B cell (primary cell): ENCODE measurements at regions of chr12 and their contacts with region 1.

Region 1: DNA sequence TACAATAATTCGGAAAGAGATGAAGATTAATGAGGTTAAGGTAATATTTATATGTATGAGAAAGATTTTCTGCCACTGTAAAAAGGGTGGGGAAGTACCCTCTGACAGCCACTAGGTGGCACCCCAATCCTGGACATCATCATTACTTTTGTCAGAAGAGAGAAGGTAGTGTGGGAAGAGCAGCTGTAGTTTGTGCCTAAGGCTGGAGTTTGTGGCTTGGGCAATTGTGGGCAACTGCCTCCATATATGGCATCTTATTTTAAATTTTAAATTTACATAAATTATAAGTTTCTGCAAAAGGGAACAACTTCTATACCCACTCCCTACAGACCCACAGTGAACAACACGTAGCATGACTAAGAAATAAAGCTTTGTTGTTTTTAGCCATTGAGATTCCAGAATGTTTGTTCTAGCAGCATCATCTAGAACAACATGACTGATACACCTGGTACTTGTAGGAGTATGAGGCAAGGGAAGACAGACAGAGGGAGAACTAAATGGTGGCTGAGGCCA is 34.4 kb upstream of the SYCP3 start:
- DNase-seq: peak; percentile 77
- ATAC-seq: peak; percentile 86
- H3K4me3 ChIP-seq: no peak overlapping the region
- H3K4me3 Mint-ChIP-seq: no peak overlapping the region
- H3K27ac ChIP-seq: no peak overlapping the region
- H3K27ac Mint-ChIP-seq: no peak overlapping the region
- H3K4me1 ChIP-seq: no peaks in the 10 kb centered on the region
- H3K4me1 Mint-ChIP-seq: peaks cover 1% of the 10 kb centered on the region
- H3K27me3 ChIP-seq: no peaks in the 10 kb centered on the region
- H3K27me3 Mint-ChIP-seq: no peaks in the 10 kb centered on the region
- CTCF ChIP-seq: peak; percentile 98

Region 2: DNA sequence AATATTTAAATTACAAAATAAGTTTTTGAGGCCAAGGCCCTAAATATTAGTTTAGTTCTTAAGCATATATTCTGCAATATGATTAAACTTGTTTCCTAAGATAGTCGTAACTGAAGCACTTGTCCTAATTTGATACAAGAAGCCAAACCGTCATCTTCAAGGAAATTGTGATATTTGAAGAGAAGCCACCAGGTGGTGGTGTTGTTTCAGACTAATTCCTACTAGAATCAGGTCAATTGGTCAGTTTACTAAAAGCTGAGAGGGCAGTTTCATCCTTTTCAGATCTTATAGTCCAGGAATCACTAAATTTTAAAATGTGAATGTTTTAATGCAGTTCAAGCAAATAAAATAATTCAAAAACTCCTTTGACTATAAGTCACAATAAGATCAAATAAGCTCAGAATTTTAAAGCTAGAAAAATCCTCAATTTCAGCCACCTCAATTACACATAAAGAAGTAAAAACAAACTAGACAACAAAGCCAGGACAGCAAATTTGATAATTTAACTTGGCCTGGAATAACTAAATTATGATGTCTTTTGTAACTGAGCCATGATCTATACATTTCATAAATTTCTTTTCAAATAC is 359.1 kb before region 1 on chr12:
- CTCF ChIA-PET with region 1: interaction called, 11 read pairs
- POLR2A ChIA-PET with region 1: no interaction called
- intact Hi-C with region 1: loop called (anchors 2 kb)
- DNase-seq: peak; percentile 52
- ATAC-seq: no peak
- H3K4me3 ChIP-seq: no peak overlapping the region
- H3K4me3 Mint-ChIP-seq: no peak overlapping the region
- H3K27ac ChIP-seq: no peak overlapping the region
- H3K27ac Mint-ChIP-seq: no peak overlapping the region
- H3K4me1 ChIP-seq: no peaks in the 10 kb centered on the region
- H3K4me1 Mint-ChIP-seq: no peaks in the 10 kb centered on the region
- H3K27me3 ChIP-seq: peaks cover 0 to 3% (median 0%) of the 10 kb centered on the region in 4 experiments
- H3K27me3 Mint-ChIP-seq: peaks cover 5% of the 10 kb centered on the region
- CTCF ChIP-seq: peak; percentile 79

Region 3: DNA sequence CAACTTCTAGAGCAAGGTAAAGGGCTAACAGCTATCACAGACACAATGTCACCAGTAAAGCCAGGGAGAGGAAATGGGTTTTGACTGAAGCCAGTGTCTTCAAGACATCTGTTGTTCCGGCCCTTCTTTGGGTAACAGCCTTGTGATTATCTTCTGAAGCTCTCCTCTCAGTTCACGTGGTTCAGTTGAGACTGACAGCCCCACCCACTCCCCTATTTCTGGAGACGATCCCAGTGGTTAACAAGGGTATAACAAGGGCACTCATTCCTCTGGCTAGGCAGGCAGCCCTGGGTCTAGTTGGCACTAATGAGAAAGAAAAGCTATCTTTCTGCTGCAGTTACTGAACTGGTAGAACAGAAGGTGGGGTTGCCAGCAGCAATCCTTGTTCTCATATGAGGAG is 50.2 kb after region 1 on chr12:
- CTCF ChIA-PET with region 1: interaction called, 61 read pairs
- POLR2A ChIA-PET with region 1: no interaction called
- intact Hi-C with region 1: no loop called
- DNase-seq: peak; percentile 77
- ATAC-seq: peak; percentile 96
- H3K4me3 ChIP-seq: no peak overlapping the region
- H3K4me3 Mint-ChIP-seq: no peak overlapping the region
- H3K27ac ChIP-seq: peak overlapping the region in 1 of 2 donors; percentile 50
- H3K27ac Mint-ChIP-seq: peak overlapping the region; percentile 28
- H3K4me1 ChIP-seq: peaks cover 10 to 12% of the 10 kb centered on the region in 2 donors
- H3K4me1 Mint-ChIP-seq: peaks cover 47% of the 10 kb centered on the region
- H3K27me3 ChIP-seq: no peaks in the 10 kb centered on the region
- H3K27me3 Mint-ChIP-seq: no peaks in the 10 kb centered on the region
- CTCF ChIP-seq: peak; percentile 43

Region 4: DNA sequence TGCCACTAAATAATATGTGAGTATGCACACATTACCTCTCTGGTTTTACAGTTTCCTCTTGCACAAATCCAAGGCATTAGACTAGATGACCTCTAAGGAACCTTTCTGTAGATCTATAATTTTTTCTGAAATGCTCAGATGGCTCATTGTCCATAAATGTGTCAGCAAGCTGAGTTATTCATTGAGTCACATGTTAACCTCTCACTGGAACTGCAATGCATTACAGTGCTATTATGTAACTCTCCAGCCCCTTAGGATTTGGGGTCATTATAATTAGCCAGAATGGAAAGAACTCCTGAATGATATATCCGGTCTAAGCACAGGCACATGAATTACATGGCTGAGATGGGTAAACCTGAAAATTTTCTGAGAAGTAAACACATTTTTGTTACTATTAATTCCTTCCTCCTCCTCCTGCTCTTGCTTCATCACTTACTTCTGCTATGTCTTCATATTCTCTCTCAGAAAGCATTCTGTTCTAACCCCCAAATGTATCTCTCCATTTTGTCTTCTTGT is 83.4 kb after region 1 on chr12:
- CTCF ChIA-PET with region 1: no interaction called
- POLR2A ChIA-PET with region 1: no interaction called
- intact Hi-C with region 1: no loop called
- DNase-seq: no peak
- ATAC-seq: no peak
- H3K4me3 ChIP-seq: no peak overlapping the region
- H3K4me3 Mint-ChIP-seq: no peak overlapping the region
- H3K27ac ChIP-seq: no peak overlapping the region
- H3K27ac Mint-ChIP-seq: no peak overlapping the region
- H3K4me1 ChIP-seq: peaks cover 16% of the 10 kb centered on the region in 2 donors
- H3K4me1 Mint-ChIP-seq: peaks cover 27% of the 10 kb centered on the region
- H3K27me3 ChIP-seq: no peaks in the 10 kb centered on the region
- H3K27me3 Mint-ChIP-seq: no peaks in the 10 kb centered on the region
- CTCF ChIP-seq: no peak

Region 5: DNA sequence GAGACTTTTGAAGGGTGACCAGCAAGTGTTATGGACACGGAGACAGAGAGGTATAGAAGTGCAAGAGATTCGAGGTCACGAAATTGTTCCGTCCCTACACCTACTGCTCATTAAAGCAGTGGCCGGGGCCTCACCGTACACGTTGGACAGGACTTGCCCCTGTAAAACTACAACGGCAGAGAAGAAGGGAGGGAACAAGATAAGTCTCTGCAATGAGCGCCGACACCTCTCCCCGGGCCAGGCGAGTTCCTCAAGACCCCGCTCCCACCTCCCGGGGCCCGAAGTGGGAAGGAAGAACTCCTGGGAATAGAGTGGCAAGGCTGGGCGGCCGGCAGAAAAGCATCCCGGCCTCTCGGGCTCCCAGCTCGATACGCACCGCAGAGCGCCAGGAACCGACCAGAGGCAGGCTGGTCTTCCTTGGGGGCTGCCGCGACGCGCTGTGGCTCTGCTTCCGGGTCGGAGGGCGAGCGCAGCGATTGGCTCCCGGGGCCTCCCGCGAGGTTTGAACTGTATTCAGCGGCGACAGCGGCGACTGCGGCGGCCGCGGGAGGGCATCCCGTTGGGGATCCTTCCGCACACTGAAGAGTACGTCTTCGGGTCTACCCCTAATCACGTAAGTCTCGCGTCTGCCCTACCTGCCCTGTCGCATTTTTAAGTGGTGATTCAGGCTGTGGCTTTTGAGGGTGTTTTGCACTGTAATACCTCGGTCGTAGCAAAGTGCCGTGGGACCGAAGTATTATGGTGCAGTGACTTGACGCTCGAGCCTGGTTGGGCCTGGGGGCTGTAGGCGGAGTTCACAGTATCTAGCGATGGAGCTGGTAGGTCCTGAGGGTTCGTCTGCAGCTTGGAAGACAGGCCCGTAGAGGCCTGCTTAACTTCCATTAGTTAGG is 346.2 kb after region 1 on chr12 and contains the starts of genes NUP37 and PARPBP:
- CTCF ChIA-PET with region 1: no interaction called
- POLR2A ChIA-PET with region 1: no interaction called
- intact Hi-C with region 1: loop called (anchors 5 kb)
- DNase-seq: peak; percentile 92
- ATAC-seq: peak; percentile 98
- H3K4me3 ChIP-seq: peak within 1 kb of the TSS; percentile 82 to 90 (median 84)
- H3K4me3 Mint-ChIP-seq: peak within 1 kb of the TSS; percentile 89
- H3K27ac ChIP-seq: peak within 1 kb of the TSS; percentile 80 to 88
- H3K27ac Mint-ChIP-seq: peak within 1 kb of the TSS; percentile 91
- H3K4me1 ChIP-seq: peaks cover 15 to 18% of the 10 kb centered on the region in 2 donors
- H3K4me1 Mint-ChIP-seq: peaks cover 16% of the 10 kb centered on the region
- H3K27me3 ChIP-seq: no peaks in the 10 kb centered on the region
- H3K27me3 Mint-ChIP-seq: no peaks in the 10 kb centered on the region
- CTCF ChIP-seq: no peak
- total RNA-seq, gene NUP37: 19.1 and 22.1 TPM in 2 replicates
- total RNA-seq, gene PARPBP: 5.2 and 6.6 TPM in 2 replicates